Heart right ventricle (tissue), 16 donors: ENCODE measurements at regions of chr1 and their contacts with region 1.

Region 1: GRCh38 chr1:110449661-110450651 is 993 bp upstream of the PROK1 start:
- DNase-seq: no peak
- ATAC-seq: no peak
- H3K4me3 ChIP-seq: no peak overlapping the region
- H3K27ac ChIP-seq: no peak overlapping the region
- H3K4me1 ChIP-seq: no peaks in the 10 kb centered on the region
- H3K27me3 ChIP-seq: peaks cover 5 to 39% (median 18%) of the 10 kb centered on the region in 7 donors
- CTCF ChIP-seq: no peak

Region 2: GRCh38 chr1:110298991-110299390 is 151.0 kb before region 1 on chr1:
- intact Hi-C with region 1: no loop called
- DNase-seq: no peak
- ATAC-seq: no peak
- H3K4me3 ChIP-seq: no peak overlapping the region
- H3K27ac ChIP-seq: no peak overlapping the region
- H3K4me1 ChIP-seq: no peaks in the 10 kb centered on the region
- H3K27me3 ChIP-seq: no peaks in the 10 kb centered on the region
- CTCF ChIP-seq: no peak

Region 3: DNA sequence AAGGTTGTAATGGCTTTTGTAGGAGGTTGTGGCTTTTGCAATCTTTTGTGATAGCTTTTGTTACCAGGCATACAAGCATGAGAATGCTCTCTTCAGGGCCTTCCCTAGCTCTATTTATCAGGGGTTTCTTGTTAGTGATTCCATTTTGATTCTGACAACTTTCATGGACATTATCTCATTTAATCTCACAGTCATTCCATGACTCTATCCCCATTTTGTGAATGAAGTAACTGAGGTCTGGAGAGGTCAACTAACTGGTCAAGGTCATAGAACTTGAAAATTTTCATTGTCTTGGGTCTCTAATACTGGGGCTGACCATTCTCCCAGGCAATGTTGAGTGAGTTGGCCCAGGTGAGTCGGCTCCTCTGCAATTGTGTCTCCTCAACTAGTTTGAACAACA is 31.2 kb before region 1 on chr1:
- intact Hi-C with region 1: loop called in 1 of 10 experiments (anchors 5 kb)
- DNase-seq: no peak
- ATAC-seq: no peak
- H3K4me3 ChIP-seq: no peak overlapping the region
- H3K27ac ChIP-seq: no peak overlapping the region
- H3K4me1 ChIP-seq: peaks cover under 1 to 22% (median 12%) of the 10 kb centered on the region in 9 donors
- H3K27me3 ChIP-seq: no peaks in the 10 kb centered on the region
- CTCF ChIP-seq: no peak

Region 4: GRCh38 chr1:110605901-110606656 is 156.1 kb after region 1 on chr1 and contains the start of gene KCNA2:
- intact Hi-C with region 1: no loop called
- DNase-seq: peak; percentile 55 to 61
- ATAC-seq: peak; percentile 69 to 82 (median 78)
- H3K4me3 ChIP-seq: peak within 1 kb of the TSS; percentile 54 to 68 (median 58)
- H3K27ac ChIP-seq: peak within 1 kb of the TSS in 7 of 10 donors; percentile 13 to 55 (median 36)
- H3K4me1 ChIP-seq: peaks cover 10 to 34% (median 22%) of the 10 kb centered on the region in 9 donors
- H3K27me3 ChIP-seq: peaks cover 11 to 93% (median 66%) of the 10 kb centered on the region in 7 donors
- CTCF ChIP-seq: no peak
- total RNA-seq, gene KCNA2: 0.47 to 1.6 (median 0.80) TPM